ENCODE measurements at regions of chr13 and their contacts with region 1.

Region 1: DNA sequence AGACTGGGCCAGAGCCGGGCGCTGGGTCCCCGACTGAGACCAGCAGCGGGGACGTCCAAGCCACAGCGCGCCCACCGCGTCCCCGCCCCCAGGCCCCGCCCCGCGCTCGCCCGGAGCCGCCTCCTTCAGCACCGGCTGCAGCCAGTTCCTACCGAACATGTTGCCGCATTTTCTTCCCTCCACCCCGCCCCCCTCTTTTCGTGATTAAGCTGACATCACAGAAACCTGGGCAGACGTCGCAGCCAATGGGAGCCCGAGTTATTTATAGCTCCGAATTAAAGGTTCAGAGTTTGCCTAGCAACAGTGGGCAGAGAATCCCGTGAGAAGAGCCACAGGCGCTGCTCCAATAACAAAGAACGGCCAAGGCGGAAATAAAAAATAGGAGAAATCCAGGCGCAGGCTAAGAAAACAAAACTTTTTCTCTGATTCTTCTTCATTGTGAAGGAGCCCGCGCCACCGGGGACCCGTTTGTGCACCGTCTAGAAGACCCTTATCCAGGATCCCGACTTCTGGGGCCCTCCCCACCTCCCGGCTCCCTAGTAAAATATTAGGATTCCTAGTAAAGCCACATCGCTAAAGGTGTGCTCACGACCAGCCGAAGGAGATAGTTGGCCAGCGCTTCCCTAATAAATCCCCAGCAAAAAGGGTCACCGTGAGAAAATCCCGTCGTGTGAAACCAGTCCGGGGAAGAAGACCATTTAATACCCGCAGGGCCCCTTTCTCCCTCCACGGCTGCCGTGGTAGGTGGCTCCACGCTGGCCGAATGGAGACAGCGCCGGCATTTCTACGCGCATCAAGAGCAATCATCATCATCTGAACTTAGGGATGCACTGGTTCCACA is 61.7 kb downstream of the SERP2 start:
- DNase-seq: peak; percentile 86
- H3K4me3 Mint-ChIP-seq: peak overlapping the region; percentile 71
- H3K27ac Mint-ChIP-seq: peak overlapping the region; percentile 92
- H3K4me1 Mint-ChIP-seq: peaks cover 29% of the 10 kb centered on the region
- H3K27me3 Mint-ChIP-seq: no peaks in the 10 kb centered on the region
- CTCF ChIP-seq: no peak

Region 2: GRCh38 chr13:44050450-44051063 is 384.8 kb before region 1 on chr13:
- CTCF ChIA-PET with region 1: interaction called, 5 read pairs
- intact Hi-C with region 1: loop called (anchors 1 kb)
- DNase-seq: peak; percentile 4
- H3K4me3 Mint-ChIP-seq: no peak overlapping the region
- H3K27ac Mint-ChIP-seq: no peak overlapping the region
- H3K4me1 Mint-ChIP-seq: peaks cover 6% of the 10 kb centered on the region
- H3K27me3 Mint-ChIP-seq: peaks cover 21% of the 10 kb centered on the region
- CTCF ChIP-seq: no peak

Region 3: GRCh38 chr13:44191504-44192171 is 243.7 kb before region 1 on chr13:
- CTCF ChIA-PET with region 1: no interaction called
- intact Hi-C with region 1: loop called (anchors 5 kb)
- DNase-seq: peak; percentile 33
- H3K4me3 Mint-ChIP-seq: no peak overlapping the region
- H3K27ac Mint-ChIP-seq: no peak overlapping the region
- H3K4me1 Mint-ChIP-seq: peaks cover 35% of the 10 kb centered on the region
- H3K27me3 Mint-ChIP-seq: no peaks in the 10 kb centered on the region
- CTCF ChIP-seq: no peak

Region 4: DNA sequence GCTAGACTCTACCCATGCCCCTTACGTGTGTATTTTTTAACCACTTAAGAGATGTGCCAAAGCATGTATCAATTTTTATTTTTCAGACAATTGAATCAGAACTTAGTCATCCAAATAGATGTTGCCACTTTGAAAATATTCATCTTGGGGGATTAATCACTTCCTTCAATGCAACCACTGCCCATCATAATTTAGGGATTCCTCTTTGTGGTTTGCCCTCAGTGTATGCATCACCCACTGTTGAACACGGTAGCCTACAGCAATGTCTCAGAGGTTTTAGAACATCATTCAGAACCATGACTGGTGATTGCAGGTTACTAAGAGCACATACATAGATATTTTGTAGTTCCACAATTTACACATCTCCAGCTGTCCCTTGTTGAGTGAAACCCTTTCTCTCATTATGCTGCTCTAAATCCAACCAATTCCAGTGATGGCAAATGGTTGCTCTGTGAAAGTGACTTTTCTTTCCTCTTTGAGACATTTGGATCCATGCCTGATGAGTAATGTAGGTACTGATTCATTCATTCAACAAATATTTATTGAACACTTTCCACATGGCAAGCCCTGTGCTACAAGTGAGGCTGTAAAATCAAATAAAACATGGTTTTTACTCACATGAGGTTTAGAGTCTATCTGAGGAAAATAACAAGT is 122.3 kb before region 1 on chr13:
- CTCF ChIA-PET with region 1: interaction called, 3 read pairs
- intact Hi-C with region 1: loop called (anchors 5 kb)
- DNase-seq: peak; percentile 8
- H3K4me3 Mint-ChIP-seq: peak overlapping the region; percentile 23
- H3K27ac Mint-ChIP-seq: peak overlapping the region; percentile 88
- H3K4me1 Mint-ChIP-seq: peaks cover 37% of the 10 kb centered on the region
- H3K27me3 Mint-ChIP-seq: no peaks in the 10 kb centered on the region
- CTCF ChIP-seq: no peak

Region 5: DNA sequence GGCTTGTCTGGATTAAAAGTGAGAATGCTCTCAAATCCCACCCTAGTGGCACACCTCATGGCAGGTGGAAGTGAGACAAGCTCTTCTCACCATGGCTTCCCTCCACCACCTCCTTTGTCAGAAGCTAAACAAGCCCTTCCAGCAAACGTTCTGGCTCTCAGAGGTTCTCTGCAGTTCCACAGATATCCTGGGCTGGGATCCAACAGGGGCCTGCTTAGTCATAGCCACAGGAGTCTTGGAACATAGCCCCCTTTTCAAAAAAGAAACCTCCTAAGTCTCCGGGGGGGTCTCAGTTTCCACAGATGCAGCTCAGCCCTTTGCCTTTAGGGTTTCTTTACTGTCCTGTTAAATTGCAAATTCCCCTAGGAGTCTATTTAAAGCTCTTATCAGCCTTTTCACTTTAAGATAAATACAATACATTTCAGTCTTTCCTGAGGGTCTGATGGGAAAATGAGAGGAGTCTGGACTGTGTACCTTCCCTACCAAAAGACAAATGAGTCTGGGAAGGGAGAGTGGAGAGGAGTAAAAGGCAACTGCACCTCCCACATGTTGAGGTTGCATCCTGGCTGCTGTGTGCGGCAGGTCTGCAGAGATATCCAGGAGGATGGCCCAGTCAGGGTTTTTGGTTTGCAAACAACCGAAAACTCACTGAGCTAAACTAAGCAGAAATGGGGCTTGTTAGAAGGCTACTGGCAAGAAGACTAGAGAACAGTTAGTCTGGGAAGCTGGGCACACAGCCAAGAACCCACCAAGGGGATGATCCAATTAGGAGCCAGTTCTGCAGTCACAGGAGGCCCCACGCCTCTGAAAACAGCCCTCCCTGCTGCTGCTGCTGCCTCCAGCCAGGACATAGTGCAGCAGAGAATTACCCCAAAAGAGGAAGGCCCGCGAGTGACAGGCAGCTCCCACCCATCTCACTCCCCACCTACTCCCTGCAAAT is 103.2 kb before region 1 on chr13:
- CTCF ChIA-PET with region 1: no interaction called
- intact Hi-C with region 1: no loop called
- DNase-seq: no peak
- H3K4me3 Mint-ChIP-seq: no peak overlapping the region
- H3K27ac Mint-ChIP-seq: no peak overlapping the region
- H3K4me1 Mint-ChIP-seq: no peaks in the 10 kb centered on the region
- H3K27me3 Mint-ChIP-seq: no peaks in the 10 kb centered on the region
- CTCF ChIP-seq: no peak

Measured in Calu3 (cell line).